CD8-positive, alpha-beta T cell (primary cell): ENCODE measurements at regions of chr20 and their contacts with region 1.

Region 1: GRCh38 chr20:43840382-43841070 is 74.1 kb upstream of the TOX2 start:
- DNase-seq: peak in 8 of 9 experiments; percentile 7 to 67 (median 46)
- ATAC-seq: peak; percentile 74
- H3K4me3 ChIP-seq: no peak overlapping the region
- H3K4me3 Mint-ChIP-seq: no peak overlapping the region
- H3K27ac ChIP-seq: no peak overlapping the region
- H3K27ac Mint-ChIP-seq: no peak overlapping the region
- H3K4me1 ChIP-seq: peaks cover 16% of the 10 kb centered on the region
- H3K4me1 Mint-ChIP-seq: peaks cover 38% of the 10 kb centered on the region
- H3K27me3 ChIP-seq: no peaks in the 10 kb centered on the region
- H3K27me3 Mint-ChIP-seq: no peaks in the 10 kb centered on the region
- CTCF ChIP-seq: peak; percentile 23

Region 2: DNA sequence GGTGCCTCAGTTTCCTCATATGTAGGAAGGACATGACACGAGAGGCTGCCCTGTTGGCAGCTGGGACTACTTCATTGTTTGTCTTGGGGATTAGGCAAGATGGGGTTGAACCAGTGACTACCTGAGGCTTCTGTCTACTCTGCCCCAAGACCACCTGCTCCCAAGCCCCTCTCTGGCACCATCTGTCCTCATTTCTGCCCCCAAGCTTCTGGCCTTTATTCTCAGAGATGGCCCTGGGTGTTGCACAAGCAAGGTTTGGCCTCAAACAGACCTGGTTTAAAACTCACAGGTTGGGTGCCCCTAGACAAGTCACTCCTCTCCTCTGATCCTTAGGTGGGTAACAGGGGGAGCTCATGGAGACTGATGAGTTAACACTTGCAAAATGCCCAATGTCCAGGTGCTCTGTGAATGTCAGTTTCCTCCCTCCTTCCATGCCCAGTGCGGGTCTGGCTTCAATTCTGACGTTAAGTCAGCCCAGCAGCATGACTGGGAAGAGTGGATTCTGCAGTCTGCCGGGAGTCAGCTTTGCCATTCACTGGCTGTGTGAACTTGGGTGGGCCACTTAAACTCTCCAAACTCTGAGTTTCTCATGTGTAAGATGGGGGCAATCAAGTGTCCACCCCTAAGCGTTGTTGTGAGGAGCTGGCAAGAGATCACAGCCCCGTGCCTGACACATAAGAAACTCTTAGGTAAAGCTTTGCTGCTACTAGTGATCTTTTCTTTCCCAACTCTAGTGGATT is 10.4 kb before region 1 on chr20:
- CTCF ChIA-PET with region 1: interaction called, 11 read pairs
- POLR2A ChIA-PET with region 1: no interaction called
- intact Hi-C with region 1: no loop called
- DNase-seq: no peak
- ATAC-seq: no peak
- H3K4me3 ChIP-seq: no peak overlapping the region
- H3K4me3 Mint-ChIP-seq: no peak overlapping the region
- H3K27ac ChIP-seq: no peak overlapping the region
- H3K27ac Mint-ChIP-seq: no peak overlapping the region
- H3K4me1 ChIP-seq: no peaks in the 10 kb centered on the region
- H3K4me1 Mint-ChIP-seq: no peaks in the 10 kb centered on the region
- H3K27me3 ChIP-seq: peaks cover 0 to 3% of the 10 kb centered on the region in 2 experiments
- H3K27me3 Mint-ChIP-seq: peaks cover 18% of the 10 kb centered on the region
- CTCF ChIP-seq: no peak

Region 3: GRCh38 chr20:43949741-43950618 is 109.5 kb after region 1 on chr20:
- CTCF ChIA-PET with region 1: no interaction called
- POLR2A ChIA-PET with region 1: no interaction called
- intact Hi-C with region 1: loop called in 1 of 2 experiments (anchors 5 kb)
- DNase-seq: peak; percentile 51 to 88 (median 75)
- ATAC-seq: peak; percentile 86
- H3K4me3 ChIP-seq: no peak overlapping the region
- H3K4me3 Mint-ChIP-seq: peak overlapping the region; percentile 71
- H3K27ac ChIP-seq: no peak overlapping the region
- H3K27ac Mint-ChIP-seq: peak overlapping the region; percentile 10
- H3K4me1 ChIP-seq: peaks cover 85% of the 10 kb centered on the region
- H3K4me1 Mint-ChIP-seq: peaks cover 90% of the 10 kb centered on the region
- H3K27me3 ChIP-seq: peaks cover 0 to 14% of the 10 kb centered on the region in 2 experiments
- H3K27me3 Mint-ChIP-seq: peaks cover 22% of the 10 kb centered on the region
- CTCF ChIP-seq: no peak

Region 4: DNA sequence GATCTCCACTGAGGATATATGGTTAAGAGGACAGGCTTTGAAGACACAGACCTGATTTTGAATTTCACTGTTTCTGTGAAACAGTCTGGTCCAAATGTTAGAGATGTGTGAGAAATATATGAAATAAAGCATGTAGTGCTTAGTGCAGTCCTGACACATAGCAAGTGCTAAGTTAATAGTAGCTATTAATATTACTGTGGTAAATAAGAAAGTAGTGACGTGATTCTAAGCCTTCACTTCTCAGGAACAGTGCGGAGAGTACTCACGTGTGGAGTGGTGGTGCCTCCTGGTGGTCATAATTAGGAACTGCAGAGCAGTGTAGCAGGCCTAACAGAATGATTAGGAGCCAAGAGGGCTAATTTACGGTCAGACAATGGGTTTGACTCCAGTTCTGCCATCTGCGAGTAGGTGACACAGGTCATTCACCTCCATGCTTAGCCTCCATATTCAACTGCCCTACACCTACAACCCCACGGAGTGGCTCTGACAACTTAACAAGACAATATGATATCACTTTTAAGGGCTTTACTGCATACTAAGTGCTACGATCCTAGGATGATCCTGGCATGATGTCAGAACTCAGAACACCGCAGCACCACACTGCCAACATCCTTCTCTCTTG is 240.2 kb after region 1 on chr20:
- CTCF ChIA-PET with region 1: interaction called, 5 read pairs
- POLR2A ChIA-PET with region 1: no interaction called
- intact Hi-C with region 1: loop called in 1 of 2 experiments (anchors 5 kb)
- DNase-seq: peak; percentile 61 to 88 (median 79)
- ATAC-seq: peak; percentile 99
- H3K4me3 ChIP-seq: no peak overlapping the region
- H3K4me3 Mint-ChIP-seq: no peak overlapping the region
- H3K27ac ChIP-seq: no peak overlapping the region
- H3K27ac Mint-ChIP-seq: peak overlapping the region; percentile 2
- H3K4me1 ChIP-seq: peaks cover 7% of the 10 kb centered on the region
- H3K4me1 Mint-ChIP-seq: peaks cover 21% of the 10 kb centered on the region
- H3K27me3 ChIP-seq: no peaks in the 10 kb centered on the region
- H3K27me3 Mint-ChIP-seq: no peaks in the 10 kb centered on the region
- CTCF ChIP-seq: peak; percentile 98